Posterior vena cava (tissue), 2 donors: ENCODE measurements at regions of chr12 and their contacts with region 1.

Region 1: GRCh38 chr12:49232940-49233841 is 31.7 kb upstream of the TUBA1C start:
- DNase-seq: peak; percentile 84

Region 2: GRCh38 chr12:49088190-49088931 is 144.8 kb before region 1 on chr12:
- intact Hi-C with region 1: loop called in 1 of 2 experiments (anchors 10 kb)
- DNase-seq: peak; percentile 85

Region 3: GRCh38 chr12:49130151-49131050 is 102.8 kb before region 1 on chr12:
- intact Hi-C with region 1: loop called (anchors 5 to 10 kb)
- DNase-seq: peak; percentile 99

Region 4: GRCh38 chr12:49188914-49189367 is 44.2 kb before region 1 on chr12 and contains the start of gene TUBA1A:
- intact Hi-C with region 1: loop called (anchors 1 to 2 kb)
- DNase-seq: peak; percentile 97
- total RNA-seq, gene TUBA1A: 240 to 247 TPM

Region 5: DNA sequence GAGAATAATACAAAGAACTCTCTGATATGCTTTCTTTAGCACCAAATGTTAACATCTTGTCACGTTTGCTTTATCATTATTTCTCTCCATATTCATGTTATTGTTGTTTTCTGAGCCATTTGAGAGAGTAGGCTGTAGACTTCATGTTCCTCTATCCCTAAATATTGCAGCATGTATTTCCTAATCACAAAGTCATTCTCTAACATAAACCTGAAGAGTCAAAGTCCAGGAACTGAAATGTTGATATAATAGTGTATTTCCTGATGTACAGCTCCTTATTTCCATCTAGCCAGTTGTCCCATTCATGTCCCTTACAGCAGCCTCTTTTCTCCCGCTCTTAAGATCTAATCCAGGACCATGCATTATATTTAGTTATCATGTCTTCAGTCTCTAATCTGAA is 206.8 kb after region 1 on chr12:
- intact Hi-C with region 1: no loop called
- DNase-seq: no peak